Activated CD8-positive, alpha-beta T cell treated with anti-CD3 and anti-CD28 coated beads for 36 hours (primary cell): ENCODE measurements at regions of chr19 and their contacts with region 1.

Region 1: DNA sequence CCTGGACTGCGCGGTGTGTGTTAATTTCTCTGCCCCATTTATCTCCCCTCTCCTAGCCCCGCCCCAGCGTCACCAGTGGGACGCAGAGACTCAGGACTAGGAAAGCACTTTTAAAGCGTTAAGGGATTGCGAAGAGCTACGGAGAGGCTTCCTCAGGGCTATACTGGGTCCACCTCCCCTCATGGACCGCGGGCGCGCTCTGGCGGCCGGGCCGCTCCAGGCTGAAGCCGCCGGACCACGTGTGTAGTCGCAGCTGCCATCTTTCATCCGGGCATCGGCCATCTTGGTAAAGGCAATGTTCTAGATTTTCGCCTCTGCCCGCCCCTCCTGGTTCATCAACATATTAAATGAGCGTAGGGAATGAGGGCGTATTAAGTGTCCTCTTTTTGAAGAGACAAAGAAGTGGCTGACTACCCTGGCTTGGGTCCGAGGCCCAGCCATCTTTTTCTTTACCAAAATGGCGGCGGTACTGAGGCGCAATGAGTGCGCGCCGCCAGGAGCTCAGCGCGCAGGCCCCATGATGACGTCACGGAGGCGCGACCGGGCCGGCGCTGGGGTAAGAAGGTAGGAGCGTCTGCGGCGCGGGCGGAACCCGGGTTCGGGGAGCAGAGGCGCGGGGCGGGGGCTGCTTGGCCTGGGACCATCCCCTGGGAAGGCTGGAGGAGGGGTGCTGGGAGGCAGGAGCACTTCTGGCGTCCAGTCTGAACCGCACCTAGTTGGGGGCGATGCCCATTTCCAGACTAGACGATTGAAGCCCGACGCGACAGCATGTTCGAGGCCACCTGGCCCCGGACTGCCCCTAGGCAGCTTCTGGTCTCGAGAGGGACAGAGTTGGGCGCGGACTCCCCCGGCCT is at the start of gene CCDC124:
- DNase-seq: peak; percentile 95
- ATAC-seq: peak; percentile 96
- H3K4me3 Mint-ChIP-seq: peak within 1 kb of the TSS; percentile 88
- H3K27ac Mint-ChIP-seq: peak within 1 kb of the TSS; percentile 97
- H3K4me1 Mint-ChIP-seq: peaks cover 24% of the 10 kb centered on the region
- H3K27me3 Mint-ChIP-seq: no peaks in the 10 kb centered on the region
- CTCF ChIP-seq: peak; percentile 85
- total RNA-seq, gene CCDC124: 120 to 129 TPM

Region 2: DNA sequence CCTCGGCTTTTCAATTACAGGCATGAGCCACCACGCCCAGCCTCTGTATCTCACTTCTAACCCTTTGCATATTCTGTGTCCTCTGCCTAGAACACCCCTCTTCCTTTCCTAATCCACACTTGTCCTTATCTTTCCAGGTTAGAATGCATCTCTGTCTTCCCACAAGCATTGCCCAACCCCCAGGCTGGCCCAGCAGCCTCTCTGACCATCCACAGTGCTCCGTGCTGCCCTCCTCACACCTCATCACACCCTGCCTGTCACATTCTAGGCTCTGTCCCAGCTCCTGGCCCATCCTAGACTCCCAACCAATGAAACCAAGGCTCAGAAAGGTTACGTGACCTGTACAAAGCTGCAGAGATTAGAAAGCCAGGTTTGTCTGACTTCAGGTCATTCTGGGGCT is 96.2 kb before region 1 on chr19:
- CTCF ChIA-PET with region 1: no interaction called
- POLR2A ChIA-PET with region 1: no interaction called
- intact Hi-C with region 1: no loop called
- DNase-seq: no peak
- ATAC-seq: no peak
- H3K4me3 Mint-ChIP-seq: no peak overlapping the region
- H3K27ac Mint-ChIP-seq: peak overlapping the region; percentile 0
- H3K4me1 Mint-ChIP-seq: peaks cover 15% of the 10 kb centered on the region
- H3K27me3 Mint-ChIP-seq: no peaks in the 10 kb centered on the region
- CTCF ChIP-seq: no peak

Region 3: DNA sequence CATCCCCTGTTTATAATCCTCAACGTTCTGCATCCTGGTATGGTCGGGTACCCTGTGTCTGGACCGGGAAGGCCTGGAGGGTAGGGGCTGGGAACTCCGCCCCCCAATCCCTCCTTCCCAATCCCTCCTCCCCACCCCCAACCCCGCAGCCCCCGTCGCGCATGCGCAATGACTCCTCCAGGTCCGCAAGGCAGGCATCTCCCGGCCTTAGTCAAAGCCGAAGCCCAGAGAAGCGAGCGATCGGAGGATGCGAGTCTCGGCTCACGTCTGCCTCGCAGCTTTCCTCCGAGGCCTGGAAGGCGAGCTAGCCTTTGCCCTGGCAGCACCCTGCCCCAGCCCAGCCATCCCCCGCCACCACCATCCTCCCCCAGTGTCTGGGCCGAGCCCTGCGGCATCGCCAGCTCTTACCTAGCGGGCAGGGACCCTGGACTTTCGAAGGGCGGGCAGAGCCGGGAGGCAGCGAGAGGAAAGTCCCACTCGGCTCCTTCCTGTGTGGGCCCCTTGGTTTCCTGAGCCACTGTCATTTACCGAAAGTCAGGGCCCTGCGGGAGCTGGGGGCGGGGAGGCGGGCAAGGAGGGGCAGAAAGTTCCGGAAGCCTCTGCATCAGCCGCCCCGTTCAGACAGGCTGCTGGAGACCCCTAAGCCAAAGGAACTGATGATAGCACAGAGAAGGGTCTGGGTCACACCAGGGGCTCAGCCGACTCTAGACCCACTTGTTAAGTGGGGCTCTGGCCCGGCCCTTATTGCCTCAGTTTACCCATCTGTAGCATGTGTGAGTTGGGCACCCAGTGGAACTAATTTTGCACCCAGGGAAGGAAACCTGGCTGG is 85.0 kb before region 1 on chr19 and contains the start of gene JAK3:
- CTCF ChIA-PET with region 1: interaction called, 194 read pairs
- POLR2A ChIA-PET with region 1: interaction called, 5 read pairs
- intact Hi-C with region 1: no loop called
- DNase-seq: peak; percentile 96
- ATAC-seq: peak; percentile 85
- H3K4me3 Mint-ChIP-seq: peak within 1 kb of the TSS; percentile 85
- H3K27ac Mint-ChIP-seq: peak within 1 kb of the TSS; percentile 93
- H3K4me1 Mint-ChIP-seq: peaks cover 61% of the 10 kb centered on the region
- H3K27me3 Mint-ChIP-seq: no peaks in the 10 kb centered on the region
- CTCF ChIP-seq: no peak
- total RNA-seq, gene JAK3: 120 to 126 TPM

Region 4: GRCh38 chr19:17865364-17866311 is 67.1 kb before region 1 on chr19:
- CTCF ChIA-PET with region 1: interaction called, 194 read pairs
- POLR2A ChIA-PET with region 1: interaction called, 123 read pairs
- intact Hi-C with region 1: loop called (anchors 5 kb)
- DNase-seq: peak; percentile 27
- ATAC-seq: peak; percentile 25
- H3K4me3 Mint-ChIP-seq: no peak overlapping the region
- H3K27ac Mint-ChIP-seq: peak overlapping the region; percentile 61
- H3K4me1 Mint-ChIP-seq: peaks cover 23% of the 10 kb centered on the region
- H3K27me3 Mint-ChIP-seq: no peaks in the 10 kb centered on the region
- CTCF ChIP-seq: no peak

Region 5: GRCh38 chr19:17873786-17874757 is 58.6 kb before region 1 on chr19:
- CTCF ChIA-PET with region 1: interaction called, 55 read pairs
- POLR2A ChIA-PET with region 1: interaction called, 6 read pairs
- intact Hi-C with region 1: loop called (anchors 5 kb)
- DNase-seq: peak; percentile 85
- ATAC-seq: peak; percentile 81
- H3K4me3 Mint-ChIP-seq: peak overlapping the region; percentile 89
- H3K27ac Mint-ChIP-seq: peak overlapping the region; percentile 34
- H3K4me1 Mint-ChIP-seq: peaks cover 10% of the 10 kb centered on the region
- H3K27me3 Mint-ChIP-seq: no peaks in the 10 kb centered on the region
- CTCF ChIP-seq: no peak

Region 6: GRCh38 chr19:17947815-17948513 is 15.3 kb after region 1 on chr19:
- CTCF ChIA-PET with region 1: interaction called, 11 read pairs
- POLR2A ChIA-PET with region 1: interaction called, 23 read pairs
- intact Hi-C with region 1: no loop called
- DNase-seq: peak; percentile 95
- ATAC-seq: peak; percentile 68
- H3K4me3 Mint-ChIP-seq: peak overlapping the region; percentile 77
- H3K27ac Mint-ChIP-seq: no peak overlapping the region
- H3K4me1 Mint-ChIP-seq: peaks cover 53% of the 10 kb centered on the region
- H3K27me3 Mint-ChIP-seq: peaks cover 34% of the 10 kb centered on the region
- CTCF ChIP-seq: no peak

Region 7: GRCh38 chr19:18000935-18001778 is 68.4 kb after region 1 on chr19:
- CTCF ChIA-PET with region 1: interaction called, 132 read pairs
- POLR2A ChIA-PET with region 1: interaction called, 10 read pairs
- intact Hi-C with region 1: no loop called
- DNase-seq: peak; percentile 98
- ATAC-seq: peak; percentile 86
- H3K4me3 Mint-ChIP-seq: peak overlapping the region; percentile 90
- H3K27ac Mint-ChIP-seq: peak overlapping the region; percentile 98
- H3K4me1 Mint-ChIP-seq: peaks cover 18% of the 10 kb centered on the region
- H3K27me3 Mint-ChIP-seq: no peaks in the 10 kb centered on the region
- CTCF ChIP-seq: no peak